Panc1 (cell line): ENCODE measurements at regions of chr22 and their contacts with region 1.

Region 1: DNA sequence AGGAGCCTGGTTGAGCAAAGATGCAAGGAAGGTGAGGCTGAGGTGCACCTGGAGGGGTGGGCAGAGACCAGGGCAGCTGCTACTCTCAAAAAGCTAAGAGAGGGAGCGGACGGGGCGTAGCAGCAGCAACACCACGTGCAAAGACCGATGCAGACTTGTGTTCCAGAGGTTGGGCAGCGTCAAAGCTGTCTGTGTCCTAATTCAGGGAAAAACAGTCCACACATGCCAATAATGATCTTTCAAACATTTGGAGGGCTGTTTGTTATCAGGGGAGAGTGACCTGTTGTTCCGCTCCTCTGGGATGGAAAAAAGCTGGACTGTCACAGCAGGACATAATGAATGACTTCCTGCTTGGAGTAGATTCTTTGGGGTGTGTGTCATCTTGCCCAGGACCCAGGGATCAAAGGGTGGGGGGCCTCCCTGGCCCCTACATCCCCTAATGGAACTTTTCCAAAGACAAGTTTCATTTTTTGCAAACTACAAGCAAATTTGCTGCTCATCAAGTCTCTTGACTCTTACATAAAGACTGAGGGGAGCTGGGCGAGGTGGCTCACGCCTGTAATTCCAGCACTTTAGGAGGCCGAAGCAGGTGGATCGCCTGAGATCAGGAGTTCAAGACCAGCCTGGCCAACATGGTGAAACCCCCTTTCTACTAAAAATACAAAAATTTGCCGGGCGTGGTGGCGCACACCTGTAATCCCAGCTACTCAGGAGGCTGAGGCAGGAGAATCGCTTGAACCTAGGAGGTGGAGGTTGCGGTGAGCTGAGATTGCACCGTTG is 6.1 kb upstream of the FBLN1 start:
- DNase-seq: no peak
- ATAC-seq: no peak
- H3K4me3 ChIP-seq: no peak overlapping the region
- H3K27ac ChIP-seq: no peak overlapping the region
- H3K4me1 ChIP-seq: no peaks in the 10 kb centered on the region; the same call in 1 of the 2 replicates
- H3K27me3 ChIP-seq: no peaks in the 10 kb centered on the region
- CTCF ChIP-seq: no peak

Region 2: GRCh38 chr22:45413368-45414211 is 83.0 kb before region 1 on chr22 and contains the starts of genes RIBC2 and SMC1B:
- CTCF ChIA-PET with region 1: no interaction called
- POLR2A ChIA-PET with region 1: no interaction called
- in situ Hi-C with region 1: no loop called
- intact Hi-C with region 1: no loop called
- DNase-seq: peak; percentile 52
- ATAC-seq: peak; percentile 97
- H3K4me3 ChIP-seq: peak within 1 kb of the TSS; percentile 55 to 76
- H3K27ac ChIP-seq: peak within 1 kb of the TSS; percentile 62
- H3K4me1 ChIP-seq: peaks cover 8% of the 10 kb centered on the region
- H3K27me3 ChIP-seq: no peaks in the 10 kb centered on the region
- CTCF ChIP-seq: no peak
- total RNA-seq, gene RIBC2: 2.9 TPM
- total RNA-seq, gene SMC1B: 0.10 TPM

Region 3: DNA sequence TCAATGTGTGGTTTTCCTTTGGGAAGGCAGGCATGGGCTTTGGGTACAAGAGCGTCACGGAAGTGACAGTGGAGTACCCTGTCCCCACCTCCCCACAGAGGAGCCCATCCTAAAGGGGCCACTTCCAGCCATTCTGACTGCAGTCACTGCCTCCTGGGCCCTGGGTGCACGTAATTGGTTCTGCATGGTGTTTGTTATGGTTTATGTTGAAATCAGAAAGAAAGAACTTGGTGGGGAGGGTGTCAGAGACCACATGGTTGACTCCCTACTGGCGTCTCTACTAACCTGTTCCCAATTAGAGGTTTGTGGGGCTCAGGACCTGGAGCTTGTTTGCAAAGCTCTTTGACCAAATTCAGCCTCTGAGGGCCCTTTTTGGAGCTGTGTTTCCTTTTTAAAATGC is 42.3 kb before region 1 on chr22:
- CTCF ChIA-PET with region 1: no interaction called
- POLR2A ChIA-PET with region 1: no interaction called
- in situ Hi-C with region 1: no loop called
- intact Hi-C with region 1: loop called (anchors 1 kb)
- DNase-seq: no peak
- ATAC-seq: no peak
- H3K4me3 ChIP-seq: no peak overlapping the region
- H3K27ac ChIP-seq: no peak overlapping the region
- H3K4me1 ChIP-seq: no peaks in the 10 kb centered on the region
- H3K27me3 ChIP-seq: no peaks in the 10 kb centered on the region
- CTCF ChIP-seq: no peak